Naive thymus-derived CD4-positive, alpha-beta T cell (primary cell): ENCODE measurements at regions of chr6 and their contacts with region 1.

Region 1: GRCh38 chr6:129448965-129449364 is 261.0 kb downstream of the ARHGAP18 start:
- DNase-seq: no peak
- ATAC-seq: no peak
- H3K4me3 ChIP-seq: no peak overlapping the region
- H3K4me3 Mint-ChIP-seq: no peak overlapping the region
- H3K27ac ChIP-seq: no peak overlapping the region
- H3K27ac Mint-ChIP-seq: peak overlapping the region in 2 of 9 donors; percentile 37 to 54
- H3K4me1 ChIP-seq: peaks cover 5 to 16% of the 10 kb centered on the region in 2 donors
- H3K4me1 Mint-ChIP-seq: peaks cover 12 to 62% (median 46%) of the 10 kb centered on the region in 7 donors
- H3K27me3 ChIP-seq: no peaks in the 10 kb centered on the region
- H3K27me3 Mint-ChIP-seq: no peaks in the 10 kb centered on the region

Region 2: DNA sequence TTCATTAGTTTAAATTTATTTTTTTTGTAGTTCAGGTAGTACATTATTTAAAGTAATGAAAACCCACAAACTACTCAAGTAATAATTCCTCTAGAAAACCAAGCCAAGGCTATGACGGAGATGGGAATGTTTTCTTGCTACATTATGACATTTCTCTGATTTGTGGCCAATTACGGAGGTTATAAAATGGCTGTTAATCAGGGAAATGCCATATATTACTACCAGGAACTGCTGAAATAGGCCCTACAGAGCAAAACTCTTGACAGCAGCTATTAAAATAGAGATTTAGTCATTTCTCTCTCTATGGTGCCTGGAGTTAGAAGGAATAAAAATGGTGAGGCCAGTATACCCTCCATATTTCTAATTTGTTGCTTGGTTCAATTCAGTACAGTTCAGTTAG is 19.0 kb before region 1 on chr6:
- CTCF ChIA-PET with region 1: no interaction called
- POLR2A ChIA-PET with region 1: no interaction called
- intact Hi-C with region 1: no loop called
- DNase-seq: no peak
- ATAC-seq: no peak
- H3K4me3 ChIP-seq: no peak overlapping the region
- H3K4me3 Mint-ChIP-seq: no peak overlapping the region
- H3K27ac ChIP-seq: no peak overlapping the region
- H3K27ac Mint-ChIP-seq: no peak overlapping the region
- H3K4me1 ChIP-seq: no peaks in the 10 kb centered on the region
- H3K4me1 Mint-ChIP-seq: no peaks in the 10 kb centered on the region
- H3K27me3 ChIP-seq: no peaks in the 10 kb centered on the region
- H3K27me3 Mint-ChIP-seq: peaks cover 0 to 5% (median 0%) of the 10 kb centered on the region in 5 donors

Region 3: DNA sequence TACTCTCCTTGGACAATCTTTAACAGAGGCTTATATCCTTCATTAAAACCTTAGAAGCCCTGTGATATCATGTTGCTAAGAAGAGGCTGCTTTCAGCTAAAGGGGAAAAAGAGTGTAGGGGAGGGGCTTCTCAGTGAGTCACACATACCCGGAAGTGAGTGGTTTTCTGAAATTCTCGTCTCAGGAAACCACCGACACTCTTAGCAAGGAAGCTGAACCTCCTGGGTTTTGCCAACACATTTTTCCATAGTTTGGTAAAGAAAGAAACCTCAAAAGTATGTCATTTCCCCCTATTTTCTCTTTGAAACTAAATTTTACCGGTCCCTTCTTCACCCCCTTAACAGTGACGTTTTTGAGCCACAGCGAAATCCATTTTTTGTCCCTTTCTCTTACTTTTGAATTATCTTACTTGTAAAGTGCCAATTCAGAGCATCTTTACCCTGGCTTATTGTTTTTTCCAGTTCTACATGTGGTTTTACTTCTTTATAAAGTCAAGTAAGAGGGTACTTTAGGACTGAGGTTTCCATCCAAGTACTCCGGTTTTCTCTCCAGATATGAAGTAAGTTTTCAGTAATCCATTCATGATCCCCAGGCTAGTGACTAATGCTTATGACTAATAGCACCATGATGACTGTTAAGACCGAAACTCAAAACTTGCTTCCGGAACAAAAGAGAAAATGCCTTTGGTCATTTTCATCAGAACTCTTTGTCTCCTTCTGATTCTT is 41.7 kb after region 1 on chr6:
- CTCF ChIA-PET with region 1: no interaction called
- POLR2A ChIA-PET with region 1: no interaction called
- intact Hi-C with region 1: loop called (anchors 1 to 2 kb)
- DNase-seq: peak in 8 of 9 donors; percentile 53 to 89 (median 72)
- ATAC-seq: peak; percentile 96
- H3K4me3 ChIP-seq: peak overlapping the region; percentile 38
- H3K4me3 Mint-ChIP-seq: peak overlapping the region; percentile 61 to 90 (median 76)
- H3K27ac ChIP-seq: peak overlapping the region; percentile 73
- H3K27ac Mint-ChIP-seq: peak overlapping the region; percentile 84 to 97 (median 94)
- H3K4me1 ChIP-seq: peaks cover 15 to 21% of the 10 kb centered on the region in 2 donors
- H3K4me1 Mint-ChIP-seq: peaks cover 11 to 46% (median 32%) of the 10 kb centered on the region in 7 donors
- H3K27me3 ChIP-seq: no peaks in the 10 kb centered on the region
- H3K27me3 Mint-ChIP-seq: no peaks in the 10 kb centered on the region